Panc1 (cell line): ENCODE measurements at regions of chr3 and their contacts with region 1.

Region 1: GRCh38 chr3:109963831-109964230 is 626.5 kb upstream of the DPPA4 start:
- DNase-seq: no peak
- ATAC-seq: no peak
- H3K4me3 ChIP-seq: no peak overlapping the region
- H3K27ac ChIP-seq: no peak overlapping the region
- H3K4me1 ChIP-seq: no peaks in the 10 kb centered on the region
- H3K27me3 ChIP-seq: no peaks in the 10 kb centered on the region
- CTCF ChIP-seq: no peak

Region 2: DNA sequence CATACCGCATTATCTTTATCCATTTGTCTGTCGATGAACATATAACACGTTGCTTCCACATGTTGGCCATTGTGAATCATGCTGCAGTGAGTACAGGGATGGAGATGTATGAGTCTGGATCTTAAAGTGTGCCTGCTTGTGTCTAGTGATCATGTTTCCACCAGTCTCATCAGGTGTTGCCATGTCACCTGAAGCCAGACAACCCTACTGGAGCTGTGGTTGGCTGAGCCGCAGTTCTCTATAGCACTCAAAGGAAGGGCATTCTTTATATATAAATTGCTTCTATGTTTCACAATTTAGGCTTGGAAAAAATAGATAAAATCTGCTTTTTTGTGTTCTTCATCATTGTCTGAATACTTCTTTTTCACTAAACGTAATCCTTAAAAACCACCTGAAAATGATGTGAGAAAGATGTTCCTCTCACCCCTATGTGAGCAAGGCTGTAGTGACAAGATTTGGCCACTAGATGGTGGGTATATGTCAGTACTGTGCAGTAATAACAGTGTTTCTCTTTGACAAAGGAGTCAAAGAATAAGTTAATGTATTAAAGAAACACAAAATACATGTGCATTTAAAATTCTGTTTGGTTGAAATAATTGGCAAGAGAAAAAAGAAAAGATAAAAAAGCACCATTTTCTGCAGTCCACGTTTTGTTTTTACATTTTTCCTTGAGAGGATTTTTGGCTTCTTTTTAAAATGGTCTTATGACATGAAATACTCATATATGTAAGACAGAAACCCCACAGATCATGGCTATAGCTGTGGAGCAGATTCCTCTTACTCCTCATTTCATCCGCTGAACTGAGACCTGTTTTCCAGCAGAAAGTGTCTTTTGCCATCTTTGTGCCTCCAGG is 232.0 kb before region 1 on chr3:
- CTCF ChIA-PET with region 1: interaction called, 12 read pairs
- POLR2A ChIA-PET with region 1: interaction called, 3 read pairs
- in situ Hi-C with region 1: no loop called
- intact Hi-C with region 1: no loop called
- DNase-seq: peak; percentile 35
- ATAC-seq: peak; percentile 82
- H3K4me3 ChIP-seq: no peak overlapping the region
- H3K27ac ChIP-seq: no peak overlapping the region
- H3K4me1 ChIP-seq: no peaks in the 10 kb centered on the region
- H3K27me3 ChIP-seq: no peaks in the 10 kb centered on the region
- CTCF ChIP-seq: peak; percentile 78

Region 3: GRCh38 chr3:109888026-109888425 is 75.8 kb before region 1 on chr3:
- CTCF ChIA-PET with region 1: no interaction called
- POLR2A ChIA-PET with region 1: no interaction called
- in situ Hi-C with region 1: no loop called
- intact Hi-C with region 1: no loop called
- DNase-seq: no peak
- ATAC-seq: no peak
- H3K4me3 ChIP-seq: no peak overlapping the region
- H3K27ac ChIP-seq: no peak overlapping the region
- H3K4me1 ChIP-seq: no peaks in the 10 kb centered on the region
- H3K27me3 ChIP-seq: no peaks in the 10 kb centered on the region
- CTCF ChIP-seq: no peak